ENCODE measurements at regions of chr19 and their contacts with region 1.

Region 1: DNA sequence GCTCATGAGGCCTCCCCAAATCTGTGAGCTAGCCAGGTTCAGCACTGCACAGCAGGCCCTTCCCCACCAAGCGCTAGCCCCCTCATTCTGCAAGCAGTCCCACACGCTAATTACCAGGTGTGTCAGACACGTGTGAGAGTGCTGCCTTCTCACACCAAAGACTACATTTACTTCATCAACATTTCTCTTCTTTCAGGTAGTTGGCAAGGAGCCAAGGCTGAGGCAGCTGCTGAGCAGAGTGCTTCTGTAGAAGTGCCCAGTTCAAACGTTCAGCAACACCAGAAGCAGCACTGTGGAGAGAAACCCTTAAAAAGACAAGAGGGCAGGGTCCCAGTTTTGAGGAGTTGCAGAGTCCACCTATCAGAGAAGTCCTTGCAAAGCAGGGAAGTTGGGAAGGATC is 6.4 kb downstream of the ZNF773 start:
- DNase-seq: no peak
- H3K4me3 ChIP-seq: no peak overlapping the region
- H3K27ac ChIP-seq: no peak overlapping the region
- H3K4me1 ChIP-seq: no peaks in the 10 kb centered on the region
- H3K27me3 ChIP-seq: no peaks in the 10 kb centered on the region
- CTCF ChIP-seq: no peak

Region 2: GRCh38 chr19:57435062-57435978 is 70.8 kb before region 1 on chr19 and contains the start of gene ZNF749:
- CTCF ChIA-PET with region 1: no interaction called
- POLR2A ChIA-PET with region 1: interaction called, 10 read pairs
- intact Hi-C with region 1: no loop called
- DNase-seq: peak; percentile 99
- H3K4me3 ChIP-seq: peak within 1 kb of the TSS; percentile 83
- H3K27ac ChIP-seq: peak within 1 kb of the TSS; percentile 68
- H3K4me1 ChIP-seq: peaks cover 7% of the 10 kb centered on the region
- H3K27me3 ChIP-seq: no peaks in the 10 kb centered on the region
- CTCF ChIP-seq: no peak
- total RNA-seq, gene ZNF749: 21.6 and 22.9 TPM in 2 replicates

Region 3: DNA sequence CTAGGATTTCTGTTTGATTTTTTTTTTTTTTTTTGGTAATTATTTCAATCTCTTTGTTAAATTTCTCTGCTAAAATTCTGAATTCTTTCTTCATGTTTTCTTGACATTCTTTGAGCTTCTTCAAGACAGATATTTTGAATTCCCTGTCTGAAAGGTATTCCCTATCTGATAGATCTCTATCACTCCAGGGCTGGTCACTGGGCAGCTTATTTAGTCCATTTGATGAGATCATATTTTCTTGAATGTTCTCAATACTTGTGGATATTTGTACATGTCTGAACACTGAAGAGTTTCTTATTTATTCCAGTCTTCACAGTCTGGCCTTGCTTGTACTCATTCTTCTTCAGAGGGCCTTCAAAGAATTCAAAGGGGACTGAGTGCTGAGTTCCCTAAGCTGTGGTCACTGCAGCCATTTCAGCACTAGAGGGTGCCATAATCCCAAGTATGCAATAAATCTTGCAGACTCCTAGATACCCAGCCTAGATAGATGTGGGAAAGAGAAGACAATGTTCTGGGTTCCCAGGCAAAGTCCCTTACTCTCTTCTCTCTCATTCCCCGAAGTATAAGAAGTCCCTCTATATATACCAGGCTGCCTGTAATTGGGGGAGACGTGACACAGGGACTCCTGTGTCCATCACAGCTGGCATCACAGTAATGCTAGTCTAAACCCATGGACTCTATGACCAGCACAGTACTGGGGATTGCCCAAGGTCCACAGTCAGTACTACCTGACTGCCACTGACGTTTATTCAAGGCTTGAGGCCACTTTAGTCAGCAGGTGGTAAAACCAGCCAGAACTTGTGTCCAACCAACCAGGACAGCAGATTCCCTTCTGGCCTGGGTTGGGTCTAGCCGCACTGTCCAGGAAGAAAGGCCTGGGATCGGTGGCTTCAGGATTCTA is 40.4 kb before region 1 on chr19:
- CTCF ChIA-PET with region 1: no interaction called
- POLR2A ChIA-PET with region 1: no interaction called
- intact Hi-C with region 1: no loop called
- DNase-seq: peak; percentile 66
- H3K4me3 ChIP-seq: no peak overlapping the region
- H3K27ac ChIP-seq: no peak overlapping the region
- H3K4me1 ChIP-seq: no peaks in the 10 kb centered on the region
- H3K27me3 ChIP-seq: no peaks in the 10 kb centered on the region
- CTCF ChIP-seq: peak; percentile 61